ENCODE measurements at regions of chr2 and their contacts with region 1.

Region 1: GRCh38 chr2:135004005-135004746 is 43.1 kb downstream of the MAP3K19 start:
- DNase-seq: peak; percentile 73 to 84 (median 78)
- H3K4me3 ChIP-seq: no peak overlapping the region
- H3K27ac ChIP-seq: no peak overlapping the region
- H3K4me1 ChIP-seq: peaks cover 0 to 5% of the 10 kb centered on the region in 2 donors
- H3K27me3 ChIP-seq: no peaks in the 10 kb centered on the region
- CTCF ChIP-seq: peak; percentile 82 to 91 (median 88)
- POLR2A ChIP-seq: no peak

Region 2: DNA sequence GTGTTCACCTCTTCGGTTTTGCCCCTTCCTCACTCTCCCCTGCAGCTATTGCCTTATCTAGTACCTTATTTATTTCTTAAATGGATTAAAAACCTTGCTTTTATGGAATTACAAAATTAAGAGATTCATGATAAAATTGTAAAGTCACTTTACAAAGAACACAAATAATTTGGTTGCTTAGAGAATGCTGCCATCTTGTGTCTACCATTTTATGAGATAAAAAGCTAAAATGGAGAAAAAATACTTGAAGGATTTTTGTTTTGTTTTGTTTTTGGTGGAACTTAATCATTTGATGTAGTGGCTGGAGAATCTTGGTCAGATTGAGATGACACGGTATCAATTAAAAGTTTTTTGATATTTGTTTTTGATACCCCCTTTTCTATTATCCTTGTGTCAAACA is 596.7 kb after region 1 on chr2:
- intact Hi-C with region 1: loop called in 1 of 2 experiments (anchors 10 kb)
- DNase-seq: no peak
- H3K4me3 ChIP-seq: no peak overlapping the region
- H3K27ac ChIP-seq: no peak overlapping the region
- H3K4me1 ChIP-seq: peaks cover 0 to 5% of the 10 kb centered on the region in 2 donors
- H3K27me3 ChIP-seq: no peaks in the 10 kb centered on the region
- CTCF ChIP-seq: peak; percentile 10 to 42 (median 30)
- POLR2A ChIP-seq: no peak

Region 3: DNA sequence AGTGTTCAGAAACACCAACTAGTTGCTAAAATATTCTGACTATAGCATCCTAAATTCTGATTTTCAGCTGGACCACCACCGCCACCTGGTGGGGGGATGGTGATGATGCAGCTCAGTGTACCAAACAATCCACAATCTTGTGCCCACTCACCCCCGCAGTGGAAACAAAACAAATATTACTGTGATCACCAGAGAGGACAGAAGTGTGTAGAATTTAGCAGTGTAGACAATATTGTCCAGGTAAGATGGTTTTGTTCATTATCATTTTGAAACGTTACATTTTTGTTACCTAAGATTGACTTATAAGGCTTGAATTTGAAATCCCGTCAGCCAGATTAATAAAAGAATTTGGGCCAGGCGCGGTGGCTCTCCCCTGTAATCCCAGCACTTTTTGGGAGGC is 705.8 kb after region 1 on chr2:
- intact Hi-C with region 1: loop called in 1 of 2 experiments (anchors 5 kb)
- DNase-seq: peak; percentile 39 to 84 (median 63)
- H3K4me3 ChIP-seq: no peak overlapping the region
- H3K27ac ChIP-seq: no peak overlapping the region
- H3K4me1 ChIP-seq: no peaks in the 10 kb centered on the region
- H3K27me3 ChIP-seq: no peaks in the 10 kb centered on the region
- CTCF ChIP-seq: peak; percentile 81 to 97 (median 91)
- POLR2A ChIP-seq: no peak